Ascending aorta (tissue), 2 donors: ENCODE measurements at regions of chr1 and their contacts with region 1.

Region 1: DNA sequence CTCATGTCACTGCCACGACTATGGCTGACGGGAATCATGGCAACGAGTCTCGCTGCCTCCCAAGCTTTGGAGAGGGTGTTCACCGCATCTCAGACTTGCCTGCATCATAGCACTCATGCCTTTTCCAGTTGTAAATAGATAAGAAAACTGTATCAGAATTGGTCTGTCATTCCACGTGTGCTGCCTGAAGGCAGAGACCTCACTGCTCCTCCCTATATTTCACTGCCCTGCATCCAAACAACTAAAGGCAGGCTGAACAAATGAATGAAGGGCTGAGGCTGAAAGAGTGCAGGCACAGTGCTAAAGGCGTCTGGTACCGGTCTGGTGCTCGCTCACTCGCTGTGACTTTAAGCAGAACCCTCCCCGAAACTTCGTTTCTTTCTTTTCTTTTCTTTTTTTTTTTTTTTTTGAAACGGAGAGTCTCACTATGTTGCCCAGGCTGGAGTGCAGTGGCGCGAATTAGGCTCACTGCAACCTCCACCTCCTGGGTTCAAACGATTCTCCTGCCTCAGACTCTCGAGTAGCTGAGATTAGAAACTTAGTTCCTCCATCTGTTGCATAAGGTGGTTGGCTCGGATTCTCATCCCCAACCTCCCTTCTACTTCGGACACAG is 542 bp downstream of the EIF2B3 start:
- DNase-seq: no peak
- H3K4me3 ChIP-seq: peak overlapping the region; percentile 81 to 90
- H3K27ac ChIP-seq: peak overlapping the region; percentile 50 to 54
- H3K4me1 ChIP-seq: peaks cover 5 to 25% of the 10 kb centered on the region in 2 donors
- H3K27me3 ChIP-seq: no peaks in the 10 kb centered on the region
- CTCF ChIP-seq: no peak

Region 2: GRCh38 chr1:44721485-44722361 is 264.1 kb before region 1 on chr1:
- intact Hi-C with region 1: no loop called
- DNase-seq: peak in 1 of 2 donors; percentile 79
- H3K4me3 ChIP-seq: no peak overlapping the region
- H3K27ac ChIP-seq: peak overlapping the region; percentile 11 to 65
- H3K4me1 ChIP-seq: no peaks in the 10 kb centered on the region
- H3K27me3 ChIP-seq: no peaks in the 10 kb centered on the region
- CTCF ChIP-seq: no peak

Region 3: DNA sequence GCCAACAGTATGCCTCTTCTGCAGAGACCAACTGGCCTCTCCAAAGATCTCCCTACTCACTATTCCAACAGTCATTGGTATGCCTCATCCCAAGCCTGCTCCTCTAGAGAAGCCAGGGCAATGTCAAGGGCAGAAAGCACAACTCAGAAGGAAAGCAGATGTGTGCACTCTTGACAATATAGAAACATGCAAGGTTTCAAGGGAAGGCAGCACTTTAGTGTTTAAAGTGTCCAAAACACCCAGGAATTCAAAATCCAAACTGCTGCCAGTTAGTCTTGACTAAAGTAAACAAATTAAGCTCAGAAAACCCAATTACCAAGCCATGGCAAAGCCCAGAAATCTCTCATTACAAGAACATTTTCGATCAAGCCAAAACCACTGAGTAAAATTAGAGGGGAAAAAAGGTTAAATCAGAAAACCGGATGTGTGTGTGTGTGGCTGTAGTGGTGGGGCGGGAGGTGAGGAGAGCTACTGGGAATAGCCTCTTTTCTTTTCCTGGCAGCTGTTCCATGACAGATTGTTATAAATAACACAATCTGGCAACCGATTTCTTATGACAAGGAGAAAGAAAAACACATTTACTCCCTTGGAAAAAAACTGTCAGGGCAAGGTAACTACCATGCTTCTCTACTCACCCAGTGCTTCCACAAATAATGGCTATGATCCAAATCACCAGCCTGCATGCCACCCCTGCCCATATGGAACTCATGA is 38.6 kb before region 1 on chr1:
- intact Hi-C with region 1: loop called (anchors 2 kb)
- DNase-seq: peak in 1 of 2 donors; percentile 74
- H3K4me3 ChIP-seq: peak overlapping the region; percentile 16 to 24
- H3K27ac ChIP-seq: peak overlapping the region; percentile 82 to 86
- H3K4me1 ChIP-seq: peaks cover 13 to 34% of the 10 kb centered on the region in 2 donors
- H3K27me3 ChIP-seq: no peaks in the 10 kb centered on the region
- CTCF ChIP-seq: no peak